Mammary epithelial cell (primary cell): ENCODE measurements at regions of chr18 and their contacts with region 1.

Region 1: DNA sequence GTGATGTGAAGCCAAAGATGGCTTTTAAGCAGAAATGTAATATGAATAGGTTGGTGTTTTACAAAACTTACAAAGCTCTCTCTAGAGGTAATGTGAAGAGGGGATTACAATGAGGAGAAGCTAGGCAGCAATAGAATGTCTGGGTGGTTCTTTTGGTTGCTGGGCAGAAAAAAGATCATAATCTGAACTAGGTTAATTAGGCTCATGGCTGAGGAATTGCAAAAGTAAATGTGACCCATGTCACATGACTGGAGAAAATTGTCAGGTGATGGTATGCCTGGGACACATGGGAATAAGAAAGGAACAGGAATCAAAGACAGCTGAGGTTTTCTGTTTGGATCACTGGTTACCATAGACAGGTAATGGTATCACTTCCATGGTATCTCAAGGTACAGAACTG is 7.5 kb upstream of the RIT2 start:
- DNase-seq: no peak
- H3K4me3 ChIP-seq: no peak overlapping the region
- H3K27ac ChIP-seq: no peak overlapping the region
- H3K4me1 ChIP-seq: no peaks in the 10 kb centered on the region
- H3K27me3 ChIP-seq: no peaks in the 10 kb centered on the region
- CTCF ChIP-seq: no peak

Region 2: DNA sequence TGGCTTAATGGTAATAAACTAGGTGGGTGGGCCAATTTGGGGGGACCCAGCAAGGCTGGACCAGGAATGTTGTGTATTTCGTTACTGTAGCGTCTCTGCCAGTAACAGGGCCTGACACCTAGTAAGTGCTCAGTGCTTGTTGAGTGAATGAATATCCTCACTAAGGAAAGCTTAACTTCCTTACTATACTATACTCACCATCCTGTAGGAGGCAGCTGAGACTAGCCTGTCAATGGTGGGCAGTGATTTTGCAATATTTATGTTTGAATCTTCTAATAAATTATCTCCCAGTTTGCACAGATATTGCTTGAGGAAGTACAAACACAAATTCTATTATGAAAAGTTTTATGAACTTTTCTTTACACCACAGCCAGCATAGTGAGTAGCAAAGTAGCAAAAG is 525.0 kb after region 1 on chr18:
- CTCF ChIA-PET with region 1: no interaction called
- dilution Hi-C with region 1: no loop called
- in situ Hi-C with region 1: no loop called
- intact Hi-C with region 1: loop called (anchors 5 kb)
- DNase-seq: no peak
- H3K4me3 ChIP-seq: no peak overlapping the region
- H3K27ac ChIP-seq: no peak overlapping the region
- H3K4me1 ChIP-seq: no peaks in the 10 kb centered on the region
- H3K27me3 ChIP-seq: peaks cover 2% of the 10 kb centered on the region
- CTCF ChIP-seq: no peak